ENCODE measurements at regions of chr11 and their contacts with region 1.

Region 1: DNA sequence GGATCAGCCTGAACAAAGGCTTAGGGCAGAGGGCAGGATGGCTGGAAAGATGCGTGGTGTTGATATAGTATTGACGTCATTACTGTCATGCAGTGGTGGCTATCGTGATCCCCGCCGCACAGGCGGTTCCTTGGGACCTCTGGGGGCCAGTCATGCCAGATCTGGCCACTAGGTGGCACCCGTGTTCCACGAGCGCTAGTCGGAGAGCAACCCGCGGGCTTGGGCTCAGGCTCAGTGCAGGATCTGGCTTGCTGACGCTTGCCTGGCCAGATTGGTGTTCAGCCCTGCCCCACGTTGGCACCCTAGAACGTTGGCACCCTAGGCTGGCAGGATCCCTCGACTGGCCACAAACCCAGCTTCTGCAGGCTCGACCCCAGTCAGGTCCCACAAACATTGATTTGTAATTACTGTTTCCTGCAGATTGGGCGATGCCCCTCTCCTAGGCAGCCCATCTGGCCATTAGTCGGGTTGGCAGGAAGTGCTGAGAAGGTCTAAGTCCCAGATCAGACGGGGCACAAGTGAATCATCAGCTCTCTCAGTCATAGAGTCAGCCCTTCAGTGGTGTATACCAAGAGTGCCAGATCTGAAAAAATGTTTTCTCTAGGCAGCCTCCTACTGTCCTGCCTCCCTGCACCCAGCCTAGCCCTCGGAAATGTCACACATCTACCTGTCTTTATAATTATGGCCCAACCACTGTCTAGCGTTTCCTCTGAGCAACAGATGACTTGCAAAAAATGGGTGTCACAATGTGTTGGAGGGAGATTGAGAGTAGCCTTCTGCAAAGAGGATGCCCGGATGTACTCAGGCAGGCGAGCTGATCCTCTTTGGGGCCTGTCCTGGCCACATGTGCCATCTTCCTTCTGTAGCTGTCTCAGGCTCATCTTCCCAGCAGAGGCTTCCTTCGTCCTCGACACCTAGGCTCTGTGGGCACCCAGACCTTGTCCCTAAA is 315.3 kb downstream of the TMEM135 start:
- DNase-seq: peak; percentile 69 to 89 (median 83)
- H3K4me3 ChIP-seq: no peak overlapping the region
- H3K27ac ChIP-seq: no peak overlapping the region
- H3K4me1 ChIP-seq: peaks cover 5% of the 10 kb centered on the region
- H3K27me3 ChIP-seq: no peaks in the 10 kb centered on the region
- CTCF ChIP-seq: peak; percentile 91 to 97 (median 96)
- EP300 ChIP-seq: no peak
- POLR2A ChIP-seq: no peak

Region 2: GRCh38 chr11:87421422-87421821 is 68.4 kb after region 1 on chr11:
- intact Hi-C with region 1: loop called (anchors 1 to 10 kb)
- DNase-seq: peak in 2 of 5 donors; percentile 22 to 41
- H3K4me3 ChIP-seq: no peak overlapping the region
- H3K27ac ChIP-seq: no peak overlapping the region
- H3K4me1 ChIP-seq: peaks cover 3% of the 10 kb centered on the region
- H3K27me3 ChIP-seq: no peaks in the 10 kb centered on the region
- CTCF ChIP-seq: peak; percentile 39 to 57 (median 56)
- EP300 ChIP-seq: no peak
- POLR2A ChIP-seq: no peak

Region 3: DNA sequence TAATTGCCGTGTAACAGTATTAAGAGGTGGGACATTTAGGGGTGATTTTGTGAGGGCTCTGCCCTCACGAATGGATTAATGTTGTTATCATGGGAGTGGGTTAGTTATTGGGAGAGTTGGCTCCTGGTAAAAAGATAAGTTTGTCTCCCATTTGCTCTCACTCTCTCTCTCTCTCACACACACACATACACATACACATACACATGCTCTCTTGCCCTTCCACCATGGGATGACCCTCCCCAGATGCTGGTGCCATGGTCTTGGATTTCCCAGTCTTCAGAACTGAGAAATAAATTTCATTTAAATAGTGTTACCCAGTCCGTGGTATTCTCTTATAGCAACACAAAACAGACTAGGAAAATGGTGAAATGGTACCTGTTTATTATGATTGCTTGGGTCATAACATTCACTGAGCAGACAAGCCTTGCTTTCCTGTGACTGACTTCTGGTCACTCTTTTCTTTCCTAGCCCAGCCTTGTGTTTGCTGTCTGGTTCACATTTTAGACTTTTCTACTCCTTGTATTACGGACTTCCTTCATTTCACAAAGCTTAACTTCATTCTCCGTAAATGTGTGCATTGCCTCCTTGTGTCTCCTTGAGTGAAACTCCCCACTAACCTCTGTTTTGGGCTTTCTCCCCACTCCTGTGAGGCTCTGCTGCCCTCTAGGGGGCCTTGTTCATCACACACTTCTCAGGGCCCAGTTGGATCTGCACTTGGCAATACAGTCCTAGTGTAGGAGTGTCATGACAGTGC is 1191.0 kb after region 1 on chr11:
- intact Hi-C with region 1: loop called in 1 of 4 experiments (anchors 5 kb)
- DNase-seq: peak; percentile 45 to 82 (median 75)
- H3K4me3 ChIP-seq: no peak overlapping the region
- H3K27ac ChIP-seq: no peak overlapping the region
- H3K4me1 ChIP-seq: no peaks in the 10 kb centered on the region
- H3K27me3 ChIP-seq: no peaks in the 10 kb centered on the region
- CTCF ChIP-seq: peak; percentile 36 to 77 (median 69)
- EP300 ChIP-seq: no peak
- POLR2A ChIP-seq: no peak

Region 4: DNA sequence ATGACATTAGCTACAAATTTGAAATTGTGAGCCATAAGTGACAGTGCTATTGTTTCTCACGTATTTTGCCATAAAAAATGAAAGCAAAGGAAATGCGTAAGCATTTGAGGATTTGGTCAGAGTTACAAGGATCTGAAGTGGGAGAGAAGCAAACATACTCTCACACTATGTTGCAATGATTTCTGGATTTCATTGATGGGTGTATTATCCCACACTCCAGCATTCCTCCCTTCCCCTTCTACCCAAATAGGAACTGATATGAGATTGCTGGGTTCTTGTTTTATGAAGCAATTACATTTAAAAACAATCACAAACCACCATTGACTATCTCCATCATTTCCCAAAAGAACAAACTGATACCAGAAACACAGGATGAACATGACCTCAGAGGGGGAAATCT is 1298.5 kb after region 1 on chr11:
- intact Hi-C with region 1: no loop called
- DNase-seq: no peak
- H3K4me3 ChIP-seq: no peak overlapping the region
- H3K27ac ChIP-seq: no peak overlapping the region
- H3K4me1 ChIP-seq: no peaks in the 10 kb centered on the region
- H3K27me3 ChIP-seq: no peaks in the 10 kb centered on the region
- CTCF ChIP-seq: no peak
- EP300 ChIP-seq: no peak
- POLR2A ChIP-seq: no peak

Measured in ovary (tissue), 10 donors.